Activated T-helper 1 cell treated with anti-CD3 and anti-CD28 coated beads, Interleukin-12 subunit alpha, Interleukin-12 subunit beta, Interleukin-2, Interleukin-4 antibody, amounts not matched to agents 30 ng/mL and 10 ng/mL and 1 ng/mL, durations not matched to agents 14 hours and 24 hours and 36 hours (primary cell): ENCODE measurements at regions of chr5 and their contacts with region 1.

Region 1: GRCh38 chr5:178626484-178627258 is at the start of gene CLK4:
- DNase-seq: peak; percentile 96
- H3K4me3 Mint-ChIP-seq: peak within 1 kb of the TSS; percentile 98
- H3K27ac Mint-ChIP-seq: peak within 1 kb of the TSS; percentile 99
- H3K4me1 Mint-ChIP-seq: peaks cover 38% of the 10 kb centered on the region
- H3K27me3 Mint-ChIP-seq: peaks cover 13% of the 10 kb centered on the region
- total RNA-seq, gene CLK4: 27.5 and 28.6 TPM in 2 replicates

Region 2: DNA sequence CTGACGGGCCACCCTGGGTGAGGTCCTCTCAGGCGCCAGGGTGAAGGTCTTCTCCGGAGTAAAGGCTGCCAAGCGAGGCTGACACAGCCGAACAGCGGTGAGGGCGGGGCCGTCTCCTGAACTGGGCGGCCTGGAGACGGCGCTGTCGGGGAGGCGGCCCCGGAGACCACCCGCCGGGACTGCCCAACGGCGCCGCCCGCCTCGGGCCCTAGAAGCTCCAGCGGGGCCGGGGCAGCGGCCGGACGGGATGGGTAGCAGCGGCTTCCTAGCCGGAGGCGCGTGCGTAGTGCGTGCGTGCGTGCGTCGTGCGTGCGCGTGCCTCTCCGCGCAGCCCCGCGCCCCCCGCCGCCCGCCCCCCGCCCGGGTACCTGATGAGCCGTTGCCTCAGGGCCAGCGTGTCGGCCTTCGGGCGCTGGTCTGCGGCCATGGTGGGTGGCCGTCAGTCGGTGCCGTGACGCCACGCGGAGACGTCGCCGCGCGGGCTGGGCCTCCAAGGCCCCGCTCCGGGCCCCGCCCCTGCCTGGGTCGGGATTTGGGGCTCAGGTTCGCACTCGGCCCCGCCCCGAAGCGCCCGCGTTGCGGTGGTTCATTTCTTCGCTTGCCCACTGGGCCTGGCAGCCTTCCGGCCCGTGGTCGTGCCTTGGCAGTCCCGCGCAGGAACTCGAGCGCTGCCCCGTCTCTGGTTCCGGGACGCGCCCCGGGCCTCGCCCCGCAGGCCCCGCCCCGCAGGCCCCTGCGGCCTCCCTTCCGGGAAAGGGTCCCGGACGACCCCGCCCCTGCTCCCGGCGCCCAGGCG is 394.3 kb before region 1 on chr5 and contains the start of gene PHYKPL:
- intact Hi-C with region 1: loop called (anchors 1 kb)
- DNase-seq: peak; percentile 75
- H3K4me3 Mint-ChIP-seq: peak within 1 kb of the TSS; percentile 90
- H3K27ac Mint-ChIP-seq: peak within 1 kb of the TSS; percentile 86
- H3K4me1 Mint-ChIP-seq: peaks cover 66% of the 10 kb centered on the region
- H3K27me3 Mint-ChIP-seq: no peaks in the 10 kb centered on the region
- total RNA-seq, gene PHYKPL: 84.4 and 86.7 TPM in 2 replicates

Region 3: GRCh38 chr5:178859625-178860531 is 233.2 kb after region 1 on chr5 and contains the start of gene ZNF354B:
- intact Hi-C with region 1: loop called (anchors 1 kb)
- DNase-seq: peak; percentile 79
- H3K4me3 Mint-ChIP-seq: peak within 1 kb of the TSS; percentile 88
- H3K27ac Mint-ChIP-seq: peak within 1 kb of the TSS; percentile 75
- H3K4me1 Mint-ChIP-seq: peaks cover 25% of the 10 kb centered on the region
- H3K27me3 Mint-ChIP-seq: no peaks in the 10 kb centered on the region
- total RNA-seq, gene ZNF354B: 15.2 and 15.3 TPM in 2 replicates

Region 4: GRCh38 chr5:179530069-179530998 is 903.7 kb after region 1 on chr5:
- intact Hi-C with region 1: loop called (anchors 5 kb)
- DNase-seq: peak; percentile 50
- H3K4me3 Mint-ChIP-seq: peak overlapping the region; percentile 39
- H3K27ac Mint-ChIP-seq: no peak overlapping the region
- H3K4me1 Mint-ChIP-seq: peaks cover 14% of the 10 kb centered on the region
- H3K27me3 Mint-ChIP-seq: peaks cover 6% of the 10 kb centered on the region

Region 5: DNA sequence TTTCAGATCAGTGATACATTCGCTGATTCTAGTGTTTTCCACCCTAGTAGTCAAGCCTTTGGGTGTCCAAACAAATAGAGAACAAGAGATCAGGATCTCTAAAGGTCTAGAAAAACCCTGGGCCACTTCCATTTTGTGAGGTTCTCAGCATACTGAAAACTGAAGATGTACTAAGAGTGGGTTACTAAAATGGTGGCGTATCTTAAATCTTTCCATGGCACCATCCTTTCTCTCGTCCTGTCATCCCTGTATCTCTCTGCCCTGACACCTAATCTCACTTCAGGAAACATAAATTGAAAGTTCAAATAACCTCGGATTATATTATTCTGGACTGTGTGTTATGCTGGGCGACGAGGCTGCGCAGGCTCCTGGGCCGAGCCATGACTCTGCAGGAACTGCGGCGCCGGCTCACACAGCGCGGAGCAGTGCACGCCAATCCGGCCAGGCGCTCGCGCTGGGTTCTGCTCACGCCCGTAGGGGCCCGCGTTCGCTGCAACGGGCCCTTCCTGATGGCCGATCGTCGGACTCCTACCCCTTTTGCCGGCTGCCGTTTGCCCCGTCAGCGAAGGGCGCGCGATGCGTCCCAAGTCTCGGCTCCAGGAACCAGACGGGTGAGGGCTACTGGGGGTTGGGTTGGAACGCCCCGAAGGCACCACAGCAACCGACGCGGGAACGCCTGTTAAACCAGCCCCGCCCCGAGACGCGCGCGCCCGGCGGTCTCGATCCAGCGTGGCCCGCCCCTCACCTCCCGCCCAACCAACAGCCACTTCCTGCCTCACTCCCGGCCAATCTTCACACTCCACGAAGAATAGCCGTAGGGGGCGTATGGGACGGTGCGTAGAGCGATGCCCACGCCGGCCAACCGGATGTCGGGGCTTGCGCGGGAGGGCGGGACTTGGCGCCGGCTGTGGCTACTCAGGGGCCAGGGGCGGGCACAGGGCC is 1071.6 kb after region 1 on chr5:
- intact Hi-C with region 1: loop called (anchors 10 kb)
- DNase-seq: peak; percentile 99
- H3K4me3 Mint-ChIP-seq: peak overlapping the region; percentile 100
- H3K27ac Mint-ChIP-seq: peak overlapping the region; percentile 100
- H3K4me1 Mint-ChIP-seq: peaks cover 27% of the 10 kb centered on the region
- H3K27me3 Mint-ChIP-seq: no peaks in the 10 kb centered on the region

Region 6: GRCh38 chr5:179858586-179859427 is 1232.1 kb after region 1 on chr5 and contains the start of gene MRNIP:
- intact Hi-C with region 1: loop called (anchors 2 kb)
- DNase-seq: peak; percentile 87
- H3K4me3 Mint-ChIP-seq: peak within 1 kb of the TSS; percentile 96
- H3K27ac Mint-ChIP-seq: peak within 1 kb of the TSS; percentile 92
- H3K4me1 Mint-ChIP-seq: peaks cover 9% of the 10 kb centered on the region
- H3K27me3 Mint-ChIP-seq: no peaks in the 10 kb centered on the region
- total RNA-seq, gene MRNIP: 24.6 and 26.3 TPM in 2 replicates